MCF 10A (cell line): ENCODE measurements at regions of chr22 and their contacts with region 1.

Region 1: GRCh38 chr22:23204541-23205157 is 24.3 kb downstream of the BCR start:
- DNase-seq: peak; percentile 80
- H3K4me3 Mint-ChIP-seq: peak overlapping the region; percentile 26
- H3K27ac Mint-ChIP-seq: peak overlapping the region; percentile 58
- H3K4me1 Mint-ChIP-seq: peaks cover 32% of the 10 kb centered on the region
- H3K27me3 Mint-ChIP-seq: no peaks in the 10 kb centered on the region
- CTCF ChIP-seq: no peak

Region 2: GRCh38 chr22:23106906-23107367 is 97.7 kb before region 1 on chr22:
- CTCF ChIA-PET with region 1: no interaction called
- POLR2A ChIA-PET with region 1: no interaction called
- intact Hi-C with region 1: no loop called
- DNase-seq: no peak
- H3K4me3 Mint-ChIP-seq: no peak overlapping the region
- H3K27ac Mint-ChIP-seq: no peak overlapping the region
- H3K4me1 Mint-ChIP-seq: no peaks in the 10 kb centered on the region
- H3K27me3 Mint-ChIP-seq: no peaks in the 10 kb centered on the region
- CTCF ChIP-seq: no peak

Region 3: GRCh38 chr22:23225724-23226496 is 21.3 kb after region 1 on chr22:
- CTCF ChIA-PET with region 1: interaction called, 3 read pairs
- POLR2A ChIA-PET with region 1: interaction called, 23 read pairs
- intact Hi-C with region 1: no loop called
- DNase-seq: peak; percentile 92
- H3K4me3 Mint-ChIP-seq: peak overlapping the region; percentile 62
- H3K27ac Mint-ChIP-seq: peak overlapping the region; percentile 95
- H3K4me1 Mint-ChIP-seq: peaks cover 52% of the 10 kb centered on the region
- H3K27me3 Mint-ChIP-seq: no peaks in the 10 kb centered on the region
- CTCF ChIP-seq: no peak